Activated CD8-positive, alpha-beta T cell treated with anti-CD3 and anti-CD28 coated beads for 36 hours (primary cell): ENCODE measurements at regions of chr13 and their contacts with region 1.

Region 1: GRCh38 chr13:77345150-77345780 is 18.4 kb upstream of the MYCBP2 start:
- DNase-seq: peak; percentile 56
- ATAC-seq: peak; percentile 88
- H3K4me3 Mint-ChIP-seq: peak overlapping the region; percentile 30
- H3K27ac Mint-ChIP-seq: peak overlapping the region; percentile 95
- H3K4me1 Mint-ChIP-seq: peaks cover 21% of the 10 kb centered on the region
- H3K27me3 Mint-ChIP-seq: no peaks in the 10 kb centered on the region
- CTCF ChIP-seq: no peak

Region 2: GRCh38 chr13:76837801-76838200 is 507.5 kb before region 1 on chr13:
- CTCF ChIA-PET with region 1: no interaction called
- POLR2A ChIA-PET with region 1: no interaction called
- intact Hi-C with region 1: no loop called
- DNase-seq: no peak
- ATAC-seq: no peak
- H3K4me3 Mint-ChIP-seq: no peak overlapping the region
- H3K27ac Mint-ChIP-seq: no peak overlapping the region
- H3K4me1 Mint-ChIP-seq: no peaks in the 10 kb centered on the region
- H3K27me3 Mint-ChIP-seq: peaks cover 9% of the 10 kb centered on the region
- CTCF ChIP-seq: no peak

Region 3: DNA sequence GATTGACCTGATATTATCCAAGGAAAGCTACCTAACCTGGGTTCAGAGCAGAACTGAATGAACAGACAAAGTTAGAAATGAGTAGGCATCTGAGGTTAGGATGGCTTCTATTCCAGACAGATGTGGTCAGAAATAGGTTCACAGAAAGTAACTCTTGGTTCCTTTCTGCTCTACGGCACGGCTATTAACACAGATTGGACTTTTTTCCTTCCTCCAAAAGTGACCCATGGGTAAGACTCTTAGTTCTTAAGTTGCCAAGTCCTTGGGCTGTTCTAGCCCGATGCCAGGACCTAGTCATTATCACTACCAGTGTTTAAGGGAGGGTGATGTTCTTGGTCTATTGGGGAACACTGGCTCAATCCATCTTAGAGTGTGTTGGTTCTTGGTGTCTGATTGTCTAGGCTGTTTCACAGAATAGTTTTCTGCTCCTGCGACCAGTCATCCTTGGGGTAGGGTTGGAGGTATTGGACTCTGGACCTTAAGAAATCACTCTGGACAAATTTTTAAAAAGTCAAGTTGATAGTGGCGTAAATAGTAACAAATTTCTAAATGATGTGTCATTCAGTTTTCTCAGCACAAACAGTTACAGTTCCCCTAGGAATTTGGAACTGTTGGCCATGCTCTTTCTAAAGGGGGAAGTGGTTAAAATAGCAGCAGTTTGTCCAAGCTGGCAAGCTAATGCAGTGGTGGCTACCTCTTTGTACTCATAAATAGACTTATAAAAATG is 41.8 kb after region 1 on chr13:
- CTCF ChIA-PET with region 1: interaction called, 3 read pairs
- POLR2A ChIA-PET with region 1: interaction called, 3 read pairs
- intact Hi-C with region 1: loop called (anchors 5 kb)
- DNase-seq: no peak
- ATAC-seq: peak; percentile 48
- H3K4me3 Mint-ChIP-seq: no peak overlapping the region
- H3K27ac Mint-ChIP-seq: no peak overlapping the region
- H3K4me1 Mint-ChIP-seq: peaks cover 18% of the 10 kb centered on the region
- H3K27me3 Mint-ChIP-seq: peaks cover 3% of the 10 kb centered on the region
- CTCF ChIP-seq: no peak